AG04449 (cell line): ENCODE measurements at regions of chr14 and their contacts with region 1.

Region 1: DNA sequence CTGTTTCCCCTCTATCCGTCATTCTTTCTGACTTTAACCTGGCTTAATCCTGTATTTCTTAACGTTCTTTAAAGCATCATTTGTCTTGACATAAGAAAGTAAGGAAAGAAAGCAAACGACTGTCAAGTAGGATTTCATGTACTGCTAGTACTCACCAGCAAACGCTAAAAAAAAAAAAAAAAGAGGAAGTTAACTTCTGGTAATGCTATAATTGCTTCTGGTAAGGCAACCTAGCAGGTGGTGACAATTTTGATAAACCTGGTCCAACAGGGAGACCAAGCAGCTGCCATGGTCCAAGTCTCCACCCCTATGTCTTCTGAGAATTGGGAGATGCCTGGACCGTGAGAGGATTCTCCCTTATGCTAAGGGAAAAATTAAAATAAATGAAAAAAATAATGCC is 306.6 kb downstream of the DAD1 start:
- DNase-seq: no peak
- H3K4me3 ChIP-seq: no peak overlapping the region
- CTCF ChIP-seq: no peak

Region 2: GRCh38 chr14:22296722-22297121 is 14.3 kb after region 1 on chr14:
- CTCF ChIA-PET with region 1: interaction called, 13 read pairs
- POLR2A ChIA-PET with region 1: no interaction called
- DNase-seq: no peak
- H3K4me3 ChIP-seq: no peak overlapping the region
- CTCF ChIP-seq: no peak

Region 3: DNA sequence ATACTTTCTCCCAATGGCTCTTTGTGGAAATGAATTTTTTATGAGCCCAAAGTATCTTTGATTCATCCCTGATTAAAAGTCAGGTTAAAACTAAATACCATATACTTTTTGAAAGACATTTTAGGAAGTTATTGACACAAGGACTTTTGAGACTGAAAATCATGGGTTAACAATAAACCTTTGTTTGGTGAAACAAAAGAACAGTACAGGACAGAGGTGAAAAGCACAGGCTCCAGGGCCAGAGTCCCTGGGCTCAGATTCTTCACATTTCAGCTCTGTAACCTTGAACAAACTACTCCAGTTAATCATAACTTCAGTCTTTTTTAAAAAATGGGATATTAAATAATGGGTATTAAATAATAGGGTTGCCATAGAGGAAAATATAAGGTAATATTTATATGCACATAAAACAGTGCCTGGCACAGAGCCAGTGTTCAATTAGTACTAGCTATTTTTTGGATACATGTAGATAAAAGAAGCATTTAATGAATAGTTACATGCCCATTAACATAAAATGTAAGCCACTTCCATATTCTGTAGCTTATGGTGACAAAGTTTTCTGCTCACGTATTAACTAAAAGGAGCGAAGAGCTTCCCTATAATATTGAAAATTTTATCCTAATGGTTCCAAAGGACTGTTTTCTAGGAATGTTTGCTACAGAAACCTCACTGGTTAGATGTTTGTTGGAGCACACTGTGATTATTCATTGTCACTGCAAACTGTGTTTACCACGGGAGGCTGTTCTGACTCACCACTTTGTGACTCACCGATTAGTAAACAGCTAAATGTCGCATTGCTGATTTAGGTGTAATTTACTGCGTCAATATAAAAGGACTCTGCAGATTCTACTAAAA is 51.2 kb after region 1 on chr14:
- CTCF ChIA-PET with region 1: no interaction called
- POLR2A ChIA-PET with region 1: no interaction called
- DNase-seq: no peak
- H3K4me3 ChIP-seq: no peak overlapping the region
- CTCF ChIP-seq: no peak